ENCODE measurements at regions of chr3 and their contacts with region 1.

Region 1: DNA sequence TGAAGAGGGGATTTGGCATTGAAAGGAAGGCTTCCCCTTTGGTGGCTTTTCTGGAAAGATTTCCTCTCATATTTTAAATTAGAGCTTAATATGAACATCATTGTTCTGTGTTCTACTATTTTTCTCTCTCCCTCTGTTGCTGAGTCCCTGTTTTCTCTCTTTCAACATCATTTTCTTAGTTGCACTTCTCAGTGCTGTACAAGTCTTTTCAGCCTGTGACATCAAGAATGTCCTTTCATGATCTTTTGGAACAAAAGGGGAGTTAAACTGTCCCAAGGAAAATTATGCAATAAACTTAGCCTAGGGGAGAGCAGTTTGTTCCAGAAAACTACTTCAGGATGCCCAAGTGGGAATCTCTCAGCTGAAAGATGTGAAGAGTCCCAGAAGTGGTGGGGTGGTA is 325.1 kb downstream of the IL20RB start:
- DNase-seq: no peak
- ATAC-seq: no peak
- H3K4me3 ChIP-seq: no peak overlapping the region
- H3K27ac ChIP-seq: no peak overlapping the region
- H3K4me1 ChIP-seq: no peaks in the 10 kb centered on the region
- H3K27me3 ChIP-seq: no peaks in the 10 kb centered on the region
- CTCF ChIP-seq: no peak

Region 2: DNA sequence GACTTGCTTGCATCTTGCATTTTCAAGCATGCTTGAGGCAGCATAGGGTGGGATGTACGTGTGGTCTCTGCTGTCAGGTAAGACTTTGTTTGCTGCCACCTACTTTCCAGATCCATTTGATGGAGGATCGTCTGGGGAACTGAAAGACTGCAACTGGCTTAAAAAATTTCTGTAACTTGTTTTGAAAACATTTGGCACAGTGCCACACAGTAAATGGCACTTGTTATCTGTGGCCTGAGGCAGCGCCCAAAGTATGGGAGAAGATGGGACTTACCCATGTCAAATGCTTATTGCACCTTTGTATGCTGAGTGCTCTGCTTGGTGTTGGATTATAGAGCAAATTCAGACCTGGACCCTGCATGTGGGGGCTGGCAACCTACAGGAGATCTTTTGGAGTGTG is 51.7 kb before region 1 on chr3:
- intact Hi-C with region 1: loop called in 1 of 10 experiments (anchors 1 kb)
- DNase-seq: no peak
- ATAC-seq: no peak
- H3K4me3 ChIP-seq: no peak overlapping the region
- H3K27ac ChIP-seq: no peak overlapping the region
- H3K4me1 ChIP-seq: no peaks in the 10 kb centered on the region
- H3K27me3 ChIP-seq: peaks cover 0 to 6% (median 0%) of the 10 kb centered on the region in 7 donors
- CTCF ChIP-seq: no peak